ENCODE measurements at regions of chr1 and their contacts with region 1.

Region 1: DNA sequence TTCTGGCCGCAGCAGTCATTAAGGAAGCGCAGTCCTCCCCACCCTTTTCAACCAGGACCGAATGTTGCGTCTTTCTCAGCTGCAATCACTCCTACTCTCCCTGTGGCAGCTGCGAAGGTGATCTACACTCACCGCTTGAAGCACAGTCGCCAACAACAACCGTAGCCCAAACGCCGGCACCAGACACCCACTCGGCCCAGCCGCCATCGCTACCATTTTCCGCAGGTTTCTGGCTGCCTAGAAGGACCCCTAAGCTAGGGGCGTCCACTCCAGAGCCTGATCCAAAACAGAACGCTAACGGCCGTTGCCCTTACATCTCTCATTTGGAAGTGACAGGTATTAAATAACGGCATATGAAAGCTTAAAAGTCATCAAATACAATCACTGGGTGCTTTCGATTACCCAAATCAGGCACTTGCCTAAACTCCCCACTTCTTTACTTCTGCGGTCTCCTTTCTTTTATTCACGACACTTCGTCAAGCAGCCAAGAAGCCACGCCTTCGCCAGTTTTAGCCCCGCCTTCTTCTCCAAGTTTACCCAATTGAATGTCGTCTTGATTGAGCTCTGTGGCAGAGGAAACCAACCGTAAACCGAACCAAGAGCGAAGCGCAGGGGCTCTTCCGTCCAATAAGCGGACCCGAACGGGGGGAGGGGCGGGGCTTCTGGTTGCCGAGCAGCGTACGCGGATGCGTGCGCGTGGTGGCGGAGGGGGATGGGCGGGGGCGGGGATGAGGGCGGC is at the start of gene SELENOF:
- DNase-seq: peak; percentile 100
- H3K4me3 ChIP-seq: peak within 1 kb of the TSS; percentile 82
- H3K27ac ChIP-seq: peak within 1 kb of the TSS; percentile 90
- H3K4me1 ChIP-seq: peaks cover 17% of the 10 kb centered on the region
- H3K27me3 ChIP-seq: no peaks in the 10 kb centered on the region
- CTCF ChIP-seq: no peak
- total RNA-seq, gene SELENOF: 193 and 214 TPM in 2 replicates

Region 2: DNA sequence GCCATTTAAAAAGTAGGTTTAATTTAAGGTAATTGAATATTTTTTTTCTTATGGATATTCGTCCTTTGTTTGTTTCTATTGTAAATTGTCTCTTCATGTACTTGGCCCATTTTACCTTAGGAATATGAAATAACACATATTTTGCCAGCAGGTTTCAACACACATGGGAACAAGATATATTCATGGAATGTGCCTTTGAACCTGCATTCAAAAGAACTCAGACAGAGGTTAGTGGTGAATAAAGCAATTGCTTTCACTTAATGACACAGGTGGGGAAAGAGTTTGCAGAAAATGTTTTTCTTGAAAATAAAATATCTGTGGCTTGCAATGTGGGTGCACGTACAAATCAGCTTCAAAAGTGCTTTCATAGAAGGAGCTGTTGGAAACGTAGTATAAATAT is 1136.5 kb after region 1 on chr1:
- CTCF ChIA-PET with region 1: no interaction called
- POLR2A ChIA-PET with region 1: interaction called, 15 read pairs
- intact Hi-C with region 1: no loop called
- DNase-seq: no peak
- H3K4me3 ChIP-seq: no peak overlapping the region
- H3K27ac ChIP-seq: no peak overlapping the region
- H3K4me1 ChIP-seq: no peaks in the 10 kb centered on the region
- H3K27me3 ChIP-seq: no peaks in the 10 kb centered on the region
- CTCF ChIP-seq: no peak

Measured in A673 (cell line).